ENCODE measurements at regions of chr2 and their contacts with region 1.

Region 1: DNA sequence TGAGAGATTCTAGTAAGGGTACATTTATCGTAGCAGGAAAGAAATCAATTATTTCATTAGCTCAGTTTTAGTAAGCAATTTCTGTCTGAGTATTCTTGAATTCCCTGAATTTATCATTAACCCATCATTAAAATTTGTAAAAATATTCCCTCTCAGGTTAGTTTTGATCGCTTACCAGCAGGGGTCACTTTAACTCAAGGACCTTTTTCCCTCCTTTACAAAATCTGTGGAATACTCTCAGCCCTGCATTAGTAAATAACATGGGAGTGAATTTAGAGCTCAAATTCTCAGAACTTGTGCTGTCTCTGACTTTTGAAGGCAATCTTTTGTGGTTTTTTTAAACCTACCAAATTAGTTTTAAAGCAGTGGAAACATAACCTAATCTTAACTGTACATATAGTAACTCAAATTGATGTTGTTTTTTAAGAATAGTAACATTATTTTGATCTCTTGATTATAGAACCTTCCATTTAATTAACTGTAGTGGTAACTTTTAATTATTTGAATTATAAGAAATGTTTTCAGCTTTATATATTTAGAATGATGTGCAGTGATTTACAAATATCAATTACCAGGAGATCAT is 97.2 kb downstream of the AGPS start:
- DNase-seq: no peak
- H3K4me3 Mint-ChIP-seq: no peak overlapping the region
- H3K27ac Mint-ChIP-seq: no peak overlapping the region
- H3K4me1 Mint-ChIP-seq: no peaks in the 10 kb centered on the region
- H3K27me3 Mint-ChIP-seq: no peaks in the 10 kb centered on the region

Region 2: DNA sequence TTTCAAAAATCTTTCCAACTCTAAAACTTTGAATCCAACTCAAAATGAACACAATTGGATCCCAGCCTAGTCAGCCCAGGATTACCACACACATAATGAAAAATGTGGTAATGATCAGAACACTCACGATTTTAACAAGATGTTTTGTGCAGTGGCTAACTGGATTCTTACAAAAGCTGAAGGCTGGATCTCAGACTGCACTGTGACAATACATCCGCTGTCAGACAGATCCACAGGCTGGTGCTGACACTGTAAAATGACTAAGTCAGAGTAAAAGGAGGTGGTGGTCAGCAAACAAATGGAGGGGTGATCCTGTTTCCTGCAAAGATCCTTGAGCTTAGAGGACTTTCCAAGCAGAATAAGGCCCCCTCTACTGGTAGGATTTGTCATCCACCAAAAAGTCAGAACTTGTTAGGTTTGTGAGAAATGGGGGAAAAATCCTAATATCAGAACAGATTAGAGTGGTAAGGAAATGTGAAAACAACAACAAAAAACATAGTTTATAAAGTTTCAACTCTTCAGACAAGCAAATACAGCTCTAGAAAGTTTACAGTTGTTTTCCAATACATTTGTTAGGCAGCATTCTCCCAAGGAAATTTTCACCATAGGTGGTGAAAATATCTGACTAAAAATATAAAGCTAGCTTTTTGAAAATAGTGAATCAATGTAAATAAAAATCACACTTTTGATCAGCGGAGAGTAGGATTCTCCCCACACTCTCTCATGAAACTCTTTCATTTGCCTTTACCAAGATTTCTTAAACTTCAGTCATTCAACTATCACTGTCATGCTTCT is 114.7 kb after region 1 on chr2:
- CTCF ChIA-PET with region 1: interaction called, 12 read pairs
- POLR2A ChIA-PET with region 1: no interaction called
- DNase-seq: no peak
- H3K4me3 Mint-ChIP-seq: no peak overlapping the region
- H3K27ac Mint-ChIP-seq: no peak overlapping the region
- H3K4me1 Mint-ChIP-seq: peaks cover under 1% of the 10 kb centered on the region
- H3K27me3 Mint-ChIP-seq: peaks cover 3% of the 10 kb centered on the region